HCT116 (cell line): ENCODE measurements at regions of chr15 and their contacts with region 1.

Region 1: DNA sequence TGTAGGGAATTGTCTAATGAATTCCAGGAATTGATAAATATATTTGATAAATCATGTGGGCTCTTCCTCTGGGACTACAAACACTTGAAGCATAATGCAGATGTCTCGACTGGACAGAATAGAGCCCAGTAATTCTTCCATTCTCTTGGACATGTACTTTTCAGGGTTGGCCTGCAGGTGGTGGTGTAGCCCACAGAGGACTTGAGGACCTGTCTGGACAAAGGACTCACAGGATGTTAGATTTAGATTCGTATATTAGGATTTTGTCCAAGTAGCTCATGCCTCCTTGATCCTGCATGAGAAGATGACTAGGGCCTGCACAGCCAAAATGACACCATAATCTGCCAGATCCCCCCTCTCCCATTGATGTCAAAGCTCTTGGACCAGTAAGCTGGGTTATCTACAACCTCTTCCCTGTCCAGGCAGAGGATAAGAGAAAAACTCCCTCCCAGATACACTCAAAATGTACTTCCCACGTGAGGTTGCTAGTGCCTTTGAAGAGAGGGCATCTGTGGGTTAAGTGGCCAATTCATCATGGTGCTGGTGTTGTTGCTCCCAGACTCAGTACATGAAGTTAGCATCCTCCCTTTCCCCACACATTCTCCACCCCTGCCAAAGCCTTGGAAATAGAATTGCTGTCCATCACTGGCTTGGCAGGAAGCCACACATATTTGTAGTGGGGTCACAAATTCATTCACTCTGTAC is 88.6 kb upstream of the ZNF280D start:
- DNase-seq: peak; percentile 48
- ATAC-seq: peak; percentile 91
- H3K4me3 ChIP-seq: no peak overlapping the region
- H3K27ac ChIP-seq: no peak overlapping the region
- H3K4me1 ChIP-seq: peaks cover 18 to 28% of the 10 kb centered on the region in 2 experiments
- H3K27me3 ChIP-seq: no peaks in the 10 kb centered on the region
- CTCF ChIP-seq: peak; percentile 56 to 73 (median 73); a peak in 5 of 6 replicates
- POLR2A ChIP-seq: no peak
- RAD21 ChIP-seq: peak; percentile 85

Region 2: GRCh38 chr15:56869573-56869972 is 47.7 kb after region 1 on chr15:
- CTCF ChIA-PET with region 1: interaction called, 18 read pairs
- POLR2A ChIA-PET with region 1: interaction called, 3 read pairs
- RAD21 ChIA-PET with region 1: interaction called in 1 of 2 experiments, 5 read pairs
- intact Hi-C with region 1: no loop called
- DNase-seq: peak; percentile 33
- ATAC-seq: no peak
- H3K4me3 ChIP-seq: no peak overlapping the region
- H3K27ac ChIP-seq: no peak overlapping the region
- H3K4me1 ChIP-seq: peaks cover 6 to 11% of the 10 kb centered on the region in 2 experiments; a peak in 3 of 4 replicates
- H3K27me3 ChIP-seq: no peaks in the 10 kb centered on the region
- CTCF ChIP-seq: peak; percentile 52 to 75 (median 58); a peak in 5 of 6 replicates
- POLR2A ChIP-seq: no peak
- RAD21 ChIP-seq: peak; percentile 80

Region 3: DNA sequence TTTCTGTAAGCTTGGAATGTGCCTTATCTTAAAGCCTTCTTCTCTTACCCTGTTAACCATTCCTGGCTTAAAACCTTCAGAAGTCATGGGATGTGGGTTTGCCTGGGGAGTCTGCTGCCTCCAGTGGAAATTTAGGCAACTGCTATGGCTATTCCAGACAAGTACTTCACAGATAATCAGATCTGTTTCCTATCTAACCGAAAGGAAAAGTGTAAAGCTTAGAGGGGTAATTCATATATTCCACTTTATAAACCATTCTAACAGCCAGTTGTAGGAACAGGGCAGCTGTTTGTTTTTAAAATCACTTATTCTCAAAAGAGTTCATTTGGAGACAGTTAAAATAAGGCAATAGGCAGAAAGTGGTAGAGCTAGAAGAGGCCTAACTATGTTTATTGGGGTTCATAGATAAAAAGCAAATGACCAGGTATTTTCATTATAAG is 316.5 kb after region 1 on chr15:
- CTCF ChIA-PET with region 1: interaction called, 3 read pairs
- POLR2A ChIA-PET with region 1: no interaction called
- RAD21 ChIA-PET with region 1: no interaction called
- intact Hi-C with region 1: loop called (anchors 5 kb)
- DNase-seq: peak; percentile 33
- ATAC-seq: peak; percentile 95
- H3K4me3 ChIP-seq: no peak overlapping the region
- H3K27ac ChIP-seq: no peak overlapping the region
- H3K4me1 ChIP-seq: no peaks in the 10 kb centered on the region
- H3K27me3 ChIP-seq: no peaks in the 10 kb centered on the region
- CTCF ChIP-seq: peak; percentile 21 to 88 (median 82); a peak in 5 of 6 replicates
- POLR2A ChIP-seq: no peak
- RAD21 ChIP-seq: peak; percentile 46

Region 4: DNA sequence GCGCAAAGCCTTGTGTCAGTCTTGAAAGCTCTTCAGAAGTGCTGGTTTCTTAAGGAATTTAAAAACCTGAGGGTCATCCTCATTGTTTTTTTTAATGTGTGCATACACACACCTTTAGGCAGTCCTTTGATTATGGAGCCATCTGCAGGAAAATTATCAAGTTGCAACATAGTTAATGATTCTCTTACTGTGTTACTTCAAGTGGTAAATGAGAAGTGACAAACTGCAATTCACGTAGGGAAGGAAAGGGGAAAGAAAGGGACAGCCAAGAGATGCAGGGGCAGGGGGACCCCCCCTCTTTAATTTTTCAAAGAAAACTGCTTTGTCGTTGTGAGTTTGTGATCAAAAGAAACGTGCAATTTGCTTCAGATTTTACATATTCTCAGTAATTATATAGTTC is 392.0 kb after region 1 on chr15:
- CTCF ChIA-PET with region 1: interaction called, 8 read pairs
- POLR2A ChIA-PET with region 1: no interaction called
- RAD21 ChIA-PET with region 1: no interaction called
- intact Hi-C with region 1: loop called (anchors 1 kb)
- DNase-seq: peak; percentile 21
- ATAC-seq: peak; percentile 74
- H3K4me3 ChIP-seq: no peak overlapping the region
- H3K27ac ChIP-seq: no peak overlapping the region
- H3K4me1 ChIP-seq: peaks cover 8 to 9% of the 10 kb centered on the region in 2 experiments; a peak in 3 of 4 replicates
- H3K27me3 ChIP-seq: no peaks in the 10 kb centered on the region
- CTCF ChIP-seq: peak in 2 of 3 experiments; percentile 41 to 55; a peak in 3 of 6 replicates
- POLR2A ChIP-seq: no peak
- RAD21 ChIP-seq: peak; percentile 74